Activated CD4-positive, alpha-beta T cell treated with anti-CD3 and anti-CD28 coated beads for 36 hours (primary cell): ENCODE measurements at regions of chr1 and their contacts with region 1.

Region 1: DNA sequence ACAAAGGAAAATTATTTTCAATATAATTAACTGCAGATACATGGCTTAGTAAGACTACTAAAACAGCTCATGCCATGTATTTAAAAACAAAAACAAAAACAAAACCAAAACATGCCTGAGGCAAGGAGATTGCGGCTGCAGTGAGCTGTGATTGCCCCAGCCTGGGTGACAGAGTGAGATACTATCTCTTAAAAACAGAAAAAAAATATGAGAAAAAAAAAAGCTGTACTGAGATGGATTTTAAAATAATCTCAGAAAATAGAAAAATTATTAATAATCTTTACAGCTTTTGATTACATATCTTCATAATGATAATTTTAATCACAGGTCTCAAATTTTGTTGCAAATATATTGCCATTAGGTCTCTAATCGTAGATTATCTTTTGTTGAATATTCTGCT is 24.0 kb upstream of the LIN9 start:
- DNase-seq: no peak
- ATAC-seq: no peak
- H3K4me3 Mint-ChIP-seq: peak overlapping the region; percentile 17
- H3K27ac Mint-ChIP-seq: no peak overlapping the region
- H3K4me1 Mint-ChIP-seq: peaks cover 13% of the 10 kb centered on the region
- H3K27me3 Mint-ChIP-seq: no peaks in the 10 kb centered on the region

Region 2: DNA sequence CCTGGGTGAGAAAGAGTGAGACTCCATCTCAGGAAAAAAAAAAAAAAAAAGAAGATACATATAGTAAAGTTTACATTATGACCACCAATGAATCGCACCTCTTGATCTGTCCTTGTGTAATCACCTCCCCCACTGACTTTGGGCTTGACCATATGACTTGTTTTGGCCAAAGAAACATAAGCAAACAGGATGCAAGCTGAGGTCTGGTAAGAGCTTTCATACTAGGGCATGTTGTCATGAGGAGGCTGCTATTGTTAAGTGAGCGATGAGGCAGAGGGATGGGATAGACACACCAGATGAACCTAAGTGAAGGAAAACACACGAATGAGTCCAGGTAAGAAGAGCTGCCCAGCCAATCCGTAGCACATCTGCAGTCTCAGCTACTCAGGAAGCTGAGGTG is 690.8 kb before region 1 on chr1:
- CTCF ChIA-PET with region 1: no interaction called
- POLR2A ChIA-PET with region 1: no interaction called
- intact Hi-C with region 1: no loop called
- DNase-seq: no peak
- ATAC-seq: no peak
- H3K4me3 Mint-ChIP-seq: no peak overlapping the region
- H3K27ac Mint-ChIP-seq: no peak overlapping the region
- H3K4me1 Mint-ChIP-seq: no peaks in the 10 kb centered on the region
- H3K27me3 Mint-ChIP-seq: peaks cover 8% of the 10 kb centered on the region

Region 3: GRCh38 chr1:226195144-226195543 is 137.8 kb before region 1 on chr1:
- CTCF ChIA-PET with region 1: interaction called, 13 read pairs
- POLR2A ChIA-PET with region 1: no interaction called
- intact Hi-C with region 1: loop called in 1 of 2 experiments (anchors 1 kb)
- DNase-seq: no peak
- ATAC-seq: no peak
- H3K4me3 Mint-ChIP-seq: no peak overlapping the region
- H3K27ac Mint-ChIP-seq: no peak overlapping the region
- H3K4me1 Mint-ChIP-seq: no peaks in the 10 kb centered on the region
- H3K27me3 Mint-ChIP-seq: no peaks in the 10 kb centered on the region

Region 4: GRCh38 chr1:226201029-226201593 is 131.8 kb before region 1 on chr1:
- CTCF ChIA-PET with region 1: interaction called, 13 read pairs
- POLR2A ChIA-PET with region 1: no interaction called
- intact Hi-C with region 1: loop called in 1 of 2 experiments (anchors 1 kb)
- DNase-seq: peak; percentile 31
- ATAC-seq: no peak
- H3K4me3 Mint-ChIP-seq: no peak overlapping the region
- H3K27ac Mint-ChIP-seq: no peak overlapping the region
- H3K4me1 Mint-ChIP-seq: no peaks in the 10 kb centered on the region
- H3K27me3 Mint-ChIP-seq: peaks cover 2% of the 10 kb centered on the region

Region 5: DNA sequence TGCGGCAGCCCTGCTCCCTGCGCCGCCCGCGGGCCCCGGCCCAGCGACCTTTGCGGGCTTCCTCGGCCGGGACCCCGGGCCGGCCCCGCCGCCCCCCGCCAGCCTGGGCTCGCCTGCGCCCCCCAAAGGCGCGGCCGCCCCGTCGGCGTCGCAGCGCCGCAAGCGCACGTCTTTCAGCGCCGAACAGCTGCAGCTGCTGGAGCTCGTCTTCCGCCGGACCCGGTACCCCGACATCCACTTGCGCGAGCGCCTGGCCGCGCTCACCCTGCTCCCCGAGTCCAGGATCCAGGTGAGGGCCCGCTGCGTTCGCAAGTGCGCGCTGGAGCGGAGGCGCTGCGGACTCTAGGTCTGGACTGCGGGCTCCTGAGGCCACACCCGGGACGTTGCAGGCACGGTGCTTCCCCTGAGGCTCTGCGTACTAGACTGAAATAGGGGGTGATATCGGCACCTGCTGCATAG is 109.1 kb before region 1 on chr1:
- CTCF ChIA-PET with region 1: interaction called, 5 read pairs
- POLR2A ChIA-PET with region 1: no interaction called
- intact Hi-C with region 1: loop called in 1 of 2 experiments (anchors 5 kb)
- DNase-seq: peak; percentile 52
- ATAC-seq: peak; percentile 61
- H3K4me3 Mint-ChIP-seq: peak overlapping the region; percentile 67
- H3K27ac Mint-ChIP-seq: no peak overlapping the region
- H3K4me1 Mint-ChIP-seq: peaks cover 8% of the 10 kb centered on the region
- H3K27me3 Mint-ChIP-seq: peaks cover 19% of the 10 kb centered on the region

Region 6: GRCh38 chr1:226308723-226309315 is 24.1 kb before region 1 on chr1 and contains the start of gene LIN9:
- CTCF ChIA-PET with region 1: interaction called, 26 read pairs
- POLR2A ChIA-PET with region 1: interaction called, 4 read pairs
- intact Hi-C with region 1: loop called in 1 of 2 experiments (anchors 1 kb)
- DNase-seq: peak; percentile 97
- ATAC-seq: peak; percentile 87
- H3K4me3 Mint-ChIP-seq: peak within 1 kb of the TSS; percentile 83
- H3K27ac Mint-ChIP-seq: peak within 1 kb of the TSS; percentile 86
- H3K4me1 Mint-ChIP-seq: peaks cover 15% of the 10 kb centered on the region
- H3K27me3 Mint-ChIP-seq: peaks cover 10% of the 10 kb centered on the region
- total RNA-seq, gene LIN9: 10.6 TPM